Pancreas (tissue), 10 donors: ENCODE measurements at regions of chr10 and their contacts with region 1.

Region 1: GRCh38 chr10:11757821-11758463 is 15.8 kb downstream of the ECHDC3 start:
- DNase-seq: peak; percentile 83 to 93 (median 89)
- ATAC-seq: peak; percentile 91 to 95 (median 92)
- H3K4me3 ChIP-seq: no peak overlapping the region
- H3K27ac ChIP-seq: peak overlapping the region; percentile 40 to 84 (median 78)
- H3K4me1 ChIP-seq: peaks cover 18 to 20% (median 19%) of the 10 kb centered on the region in 3 donors
- H3K27me3 ChIP-seq: no peaks in the 10 kb centered on the region
- CTCF ChIP-seq: peak; percentile 82 to 88 (median 84)

Region 2: DNA sequence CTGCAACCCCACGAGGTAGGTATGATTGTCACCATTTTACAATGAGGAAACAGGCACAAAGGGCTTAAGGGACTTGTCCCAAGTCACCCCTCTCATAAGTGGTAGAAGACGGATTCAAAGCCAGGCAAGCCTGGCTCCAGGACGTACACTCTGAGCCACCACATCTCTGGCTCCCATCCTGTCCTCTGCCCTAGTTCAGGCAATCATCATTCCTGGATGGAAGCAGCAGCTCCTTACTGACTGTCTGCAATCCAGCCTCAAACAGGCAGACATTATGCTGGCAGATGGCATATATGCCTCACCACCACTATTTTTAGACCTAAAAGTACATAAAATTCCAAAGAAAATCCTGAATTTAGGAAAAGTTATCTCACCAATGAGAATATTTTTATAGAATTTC is 247.2 kb before region 1 on chr10:
- intact Hi-C with region 1: loop called (anchors 5 to 10 kb)
- DNase-seq: no peak
- ATAC-seq: no peak
- H3K4me3 ChIP-seq: no peak overlapping the region
- H3K27ac ChIP-seq: no peak overlapping the region
- H3K4me1 ChIP-seq: no peaks in the 10 kb centered on the region
- H3K27me3 ChIP-seq: no peaks in the 10 kb centered on the region
- CTCF ChIP-seq: no peak

Region 3: GRCh38 chr10:11515596-11516430 is 242.1 kb before region 1 on chr10:
- intact Hi-C with region 1: loop called (anchors 5 to 10 kb)
- DNase-seq: peak in 2 of 6 donors; percentile 18 to 60
- ATAC-seq: peak; percentile 83 to 97 (median 96)
- H3K4me3 ChIP-seq: no peak overlapping the region
- H3K27ac ChIP-seq: no peak overlapping the region
- H3K4me1 ChIP-seq: no peaks in the 10 kb centered on the region
- H3K27me3 ChIP-seq: no peaks in the 10 kb centered on the region
- CTCF ChIP-seq: peak; percentile 43 to 76 (median 67)